ENCODE measurements at regions of chr15 and their contacts with region 1.

Region 1: GRCh38 chr15:77034695-77035489 is 36.0 kb downstream of the TSPAN3 start:
- DNase-seq: peak; percentile 81

Region 2: DNA sequence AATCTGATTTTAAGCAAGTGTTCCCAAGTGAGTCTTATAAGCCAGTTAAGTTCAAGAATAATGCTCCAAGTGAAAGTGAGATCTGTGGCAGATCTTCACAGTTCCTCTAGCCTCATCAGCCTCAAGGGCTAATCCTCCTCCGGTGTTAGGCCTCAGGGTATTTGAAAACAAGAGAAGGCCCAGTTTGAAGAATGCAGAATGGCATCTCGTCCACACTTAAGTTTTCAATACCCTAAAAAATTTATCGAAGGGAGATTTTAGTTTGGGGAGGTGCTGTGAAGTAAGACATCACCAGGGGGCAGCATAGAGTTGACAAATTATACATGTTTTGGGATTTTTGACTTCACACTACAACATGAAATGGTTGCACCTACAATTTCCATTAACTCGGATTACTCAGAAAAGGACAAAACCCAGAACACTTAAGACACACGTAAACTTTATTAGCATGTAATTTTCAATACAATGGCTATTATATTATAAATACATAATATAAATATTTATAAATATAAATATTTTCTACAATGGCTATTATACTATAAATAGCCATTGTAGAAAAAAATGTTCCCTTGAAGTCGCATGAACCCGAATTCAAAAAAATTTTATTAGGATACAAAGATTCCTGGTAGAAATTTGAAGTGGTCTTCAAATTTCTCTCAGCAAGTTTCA is 977.4 kb before region 1 on chr15:
- intact Hi-C with region 1: loop called in 1 of 2 experiments (anchors 5 kb)
- DNase-seq: no peak

Measured in posterior vena cava (tissue), 2 donors.